ENCODE measurements at regions of chr6 and their contacts with region 1.

Region 1: GRCh38 chr6:35731736-35732532 is 4.9 kb upstream of the ARMC12 start:
- DNase-seq: peak; percentile 98
- ATAC-seq: peak; percentile 66
- H3K4me3 ChIP-seq: peak overlapping the region in 1 of 2 donors; percentile 3
- H3K27ac ChIP-seq: peak overlapping the region; percentile 97 to 100 (median 99)
- H3K4me1 ChIP-seq: peaks cover 90% of the 10 kb centered on the region
- H3K27me3 ChIP-seq: no peaks in the 10 kb centered on the region
- CTCF ChIP-seq: peak in 3 of 7 experiments; percentile 19 to 27 (median 21)
- POLR2A ChIP-seq: peak; percentile 52 to 79 (median 78)

Region 2: GRCh38 chr6:35522660-35523658 is 209.0 kb before region 1 on chr6:
- intact Hi-C with region 1: loop called (anchors 5 kb)
- DNase-seq: peak; percentile 70 to 81 (median 76)
- ATAC-seq: peak; percentile 93
- H3K4me3 ChIP-seq: no peak overlapping the region
- H3K27ac ChIP-seq: peak overlapping the region in 2 of 4 donors; percentile 3 to 39
- H3K4me1 ChIP-seq: peaks cover 9% of the 10 kb centered on the region
- H3K27me3 ChIP-seq: no peaks in the 10 kb centered on the region
- CTCF ChIP-seq: peak; percentile 82 to 99 (median 90)
- POLR2A ChIP-seq: no peak

Region 3: GRCh38 chr6:35583893-35584688 is 147.8 kb before region 1 on chr6:
- intact Hi-C with region 1: loop called (anchors 5 kb)
- DNase-seq: peak; percentile 77 to 84 (median 81)
- ATAC-seq: peak; percentile 79
- H3K4me3 ChIP-seq: no peak overlapping the region
- H3K27ac ChIP-seq: peak overlapping the region in 2 of 4 donors; percentile 5 to 14
- H3K4me1 ChIP-seq: peaks cover 19% of the 10 kb centered on the region
- H3K27me3 ChIP-seq: no peaks in the 10 kb centered on the region
- CTCF ChIP-seq: peak; percentile 41 to 90 (median 75)
- POLR2A ChIP-seq: no peak

Region 4: DNA sequence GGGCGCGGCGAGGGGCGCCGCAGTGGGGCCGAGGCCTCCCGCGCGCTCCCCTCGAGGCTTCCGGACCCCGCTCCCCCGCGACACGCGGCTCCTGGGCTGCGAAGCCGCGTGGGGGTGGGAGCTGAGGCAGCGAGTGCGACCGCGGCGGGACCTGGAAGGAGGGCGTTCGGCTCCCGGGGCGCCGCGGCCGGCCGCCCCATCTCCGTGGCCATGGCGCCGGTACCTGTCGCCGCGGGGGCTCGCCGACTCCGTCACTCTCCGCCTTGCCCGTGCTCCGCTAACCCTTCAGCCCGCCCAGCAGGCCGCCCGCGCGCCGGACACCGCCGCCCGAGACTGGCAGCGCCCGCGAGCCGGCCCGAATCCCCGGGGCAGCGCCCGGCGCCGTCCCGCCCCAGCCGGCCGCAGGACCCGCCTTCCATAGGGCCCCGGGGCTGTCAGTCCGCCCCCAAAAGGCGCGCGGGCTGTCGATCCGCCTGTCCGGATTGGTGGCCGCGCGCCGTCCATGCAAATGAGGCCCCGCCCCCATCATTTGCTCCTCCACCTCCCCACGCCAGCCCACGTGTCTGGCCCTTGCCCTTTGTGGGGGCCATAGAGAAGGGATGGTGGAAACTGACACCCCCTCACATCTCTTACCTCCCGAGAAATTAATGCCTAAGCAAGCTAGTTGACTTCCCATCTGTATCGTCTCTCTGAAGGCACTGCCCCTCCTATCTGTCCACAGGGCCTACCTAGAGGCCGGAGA is 43.2 kb before region 1 on chr6 and contains the start of gene FKBP5:
- intact Hi-C with region 1: loop called (anchors 10 kb)
- DNase-seq: peak; percentile 94 to 97 (median 96)
- ATAC-seq: peak; percentile 93
- H3K4me3 ChIP-seq: peak within 1 kb of the TSS; percentile 56 to 85
- H3K27ac ChIP-seq: peak within 1 kb of the TSS; percentile 84 to 95 (median 94)
- H3K4me1 ChIP-seq: peaks cover 35% of the 10 kb centered on the region
- H3K27me3 ChIP-seq: no peaks in the 10 kb centered on the region
- CTCF ChIP-seq: peak in 2 of 7 experiments; percentile 8 to 12
- POLR2A ChIP-seq: peak; percentile 63 to 95 (median 80)
- total RNA-seq, gene FKBP5: 133 to 138 TPM

Region 5: GRCh38 chr6:35817515-35817914 is 85.6 kb after region 1 on chr6:
- intact Hi-C with region 1: no loop called
- DNase-seq: no peak
- ATAC-seq: no peak
- H3K4me3 ChIP-seq: no peak overlapping the region
- H3K27ac ChIP-seq: no peak overlapping the region
- H3K4me1 ChIP-seq: no peaks in the 10 kb centered on the region
- H3K27me3 ChIP-seq: no peaks in the 10 kb centered on the region
- CTCF ChIP-seq: no peak
- POLR2A ChIP-seq: no peak

Measured in body of pancreas (tissue), 4 donors.